ENCODE measurements at regions of chr15 and their contacts with region 1.

Region 1: GRCh38 chr15:55407949-55408791 is at the starts of genes CCPG1 and PIERCE2:
- DNase-seq: peak; percentile 76 to 95 (median 86)
- ATAC-seq: peak; percentile 92
- H3K4me3 ChIP-seq: peak within 1 kb of the TSS; percentile 80 to 84
- H3K4me3 Mint-ChIP-seq: peak within 1 kb of the TSS; percentile 89
- H3K27ac ChIP-seq: peak within 1 kb of the TSS; percentile 82
- H3K27ac Mint-ChIP-seq: peak within 1 kb of the TSS; percentile 92
- H3K4me1 ChIP-seq: peaks cover 26% of the 10 kb centered on the region
- H3K4me1 Mint-ChIP-seq: peaks cover 34% of the 10 kb centered on the region
- H3K27me3 ChIP-seq: no peaks in the 10 kb centered on the region
- H3K27me3 Mint-ChIP-seq: no peaks in the 10 kb centered on the region
- CTCF ChIP-seq: peak; percentile 93
- total RNA-seq, gene CCPG1: 35.5 to 37.6 TPM
- total RNA-seq, gene PIERCE2: not detected

Region 2: DNA sequence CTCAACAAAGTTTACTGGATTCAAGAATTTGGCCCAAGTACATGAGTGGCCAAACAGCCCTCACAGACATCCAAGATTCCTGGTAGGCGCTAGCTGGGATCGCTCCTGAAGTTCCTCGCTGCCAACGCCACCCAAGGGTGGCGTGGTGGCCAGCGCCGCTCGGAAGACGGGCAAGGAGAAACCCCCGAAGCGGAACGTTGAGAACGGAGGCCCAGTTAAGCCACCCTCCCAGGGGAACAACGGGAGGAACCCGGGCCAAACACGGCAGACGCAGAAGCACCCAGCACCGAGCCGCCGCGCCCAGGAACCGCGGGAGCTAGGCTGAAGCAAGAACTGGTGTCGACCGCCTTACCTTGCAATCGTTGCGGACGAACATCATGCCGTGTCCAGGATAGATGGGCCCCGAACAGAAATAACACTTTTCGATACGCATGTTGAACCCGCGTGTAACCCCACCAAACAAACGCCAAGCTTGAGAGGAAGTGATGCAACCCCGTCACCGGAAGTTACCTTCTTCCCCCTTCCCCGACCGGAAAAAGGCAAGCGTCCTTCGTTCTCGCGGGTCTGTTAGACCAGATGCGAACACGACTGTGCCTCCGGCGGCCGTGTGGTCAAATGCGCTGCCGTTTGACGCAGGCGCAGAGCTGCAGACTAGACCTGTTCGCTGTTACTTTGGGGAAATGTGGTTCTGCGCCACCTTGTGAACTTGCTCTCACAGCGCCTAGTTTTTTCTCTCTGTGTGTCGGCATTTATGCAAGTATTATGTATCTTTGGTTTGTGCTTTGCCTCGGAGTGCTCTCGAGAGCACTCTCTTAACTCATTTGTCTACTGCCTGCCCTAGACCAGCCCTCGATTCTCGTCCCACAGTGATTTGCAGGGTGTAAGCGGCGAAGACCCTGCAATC is 211.5 kb before region 1 on chr15 and contains the start of gene RSL24D1:
- CTCF ChIA-PET with region 1: no interaction called
- POLR2A ChIA-PET with region 1: interaction called, 16 read pairs
- intact Hi-C with region 1: loop called (anchors 1 kb)
- DNase-seq: peak; percentile 92 to 100 (median 96)
- ATAC-seq: peak; percentile 95
- H3K4me3 ChIP-seq: peak within 1 kb of the TSS; percentile 82 to 90
- H3K4me3 Mint-ChIP-seq: no peak within 1 kb of the TSS
- H3K27ac ChIP-seq: peak within 1 kb of the TSS; percentile 94
- H3K27ac Mint-ChIP-seq: no peak within 1 kb of the TSS
- H3K4me1 ChIP-seq: peaks cover 37% of the 10 kb centered on the region
- H3K4me1 Mint-ChIP-seq: peaks cover 21% of the 10 kb centered on the region
- H3K27me3 ChIP-seq: no peaks in the 10 kb centered on the region
- H3K27me3 Mint-ChIP-seq: no peaks in the 10 kb centered on the region
- CTCF ChIP-seq: no peak
- total RNA-seq, gene RSL24D1: 181 to 186 TPM

Region 3: GRCh38 chr15:55318588-55319494 is 89.3 kb before region 1 on chr15 and contains the starts of genes PIGB and PIGBOS1:
- CTCF ChIA-PET with region 1: interaction called, 5 read pairs
- POLR2A ChIA-PET with region 1: interaction called, 22 read pairs
- intact Hi-C with region 1: loop called (anchors 1 to 5 kb)
- DNase-seq: peak; percentile 59 to 90 (median 79)
- ATAC-seq: peak; percentile 88
- H3K4me3 ChIP-seq: peak within 1 kb of the TSS; percentile 80 to 98
- H3K4me3 Mint-ChIP-seq: peak within 1 kb of the TSS; percentile 98
- H3K27ac ChIP-seq: peak within 1 kb of the TSS; percentile 95 to 99
- H3K27ac Mint-ChIP-seq: peak within 1 kb of the TSS; percentile 100
- H3K4me1 ChIP-seq: peaks cover 39% of the 10 kb centered on the region
- H3K4me1 Mint-ChIP-seq: peaks cover 81% of the 10 kb centered on the region
- H3K27me3 ChIP-seq: no peaks in the 10 kb centered on the region
- H3K27me3 Mint-ChIP-seq: no peaks in the 10 kb centered on the region
- CTCF ChIP-seq: no peak
- total RNA-seq, gene PIGB: 17.8 to 19.2 TPM
- total RNA-seq, gene PIGBOS1: 6.4 to 6.8 TPM

Region 4: GRCh38 chr15:55372701-55373440 is 35.3 kb before region 1 on chr15:
- CTCF ChIA-PET with region 1: interaction called, 3 read pairs
- POLR2A ChIA-PET with region 1: no interaction called
- intact Hi-C with region 1: loop called in 1 of 2 experiments (anchors 5 kb)
- DNase-seq: no peak
- ATAC-seq: no peak
- H3K4me3 ChIP-seq: no peak overlapping the region
- H3K4me3 Mint-ChIP-seq: no peak overlapping the region
- H3K27ac ChIP-seq: no peak overlapping the region
- H3K27ac Mint-ChIP-seq: peak overlapping the region; percentile 29
- H3K4me1 ChIP-seq: no peaks in the 10 kb centered on the region
- H3K4me1 Mint-ChIP-seq: no peaks in the 10 kb centered on the region
- H3K27me3 ChIP-seq: no peaks in the 10 kb centered on the region
- H3K27me3 Mint-ChIP-seq: no peaks in the 10 kb centered on the region
- CTCF ChIP-seq: no peak

Region 5: GRCh38 chr15:55494931-55495330 is 86.8 kb after region 1 on chr15:
- CTCF ChIA-PET with region 1: no interaction called
- POLR2A ChIA-PET with region 1: no interaction called
- intact Hi-C with region 1: loop called (anchors 1 to 5 kb)
- DNase-seq: peak in 1 of 9 experiments; percentile 27
- ATAC-seq: peak; percentile 16
- H3K4me3 ChIP-seq: no peak overlapping the region
- H3K4me3 Mint-ChIP-seq: no peak overlapping the region
- H3K27ac ChIP-seq: no peak overlapping the region
- H3K27ac Mint-ChIP-seq: no peak overlapping the region
- H3K4me1 ChIP-seq: peaks cover 9% of the 10 kb centered on the region
- H3K4me1 Mint-ChIP-seq: peaks cover 9% of the 10 kb centered on the region
- H3K27me3 ChIP-seq: no peaks in the 10 kb centered on the region
- H3K27me3 Mint-ChIP-seq: no peaks in the 10 kb centered on the region
- CTCF ChIP-seq: no peak

Region 6: DNA sequence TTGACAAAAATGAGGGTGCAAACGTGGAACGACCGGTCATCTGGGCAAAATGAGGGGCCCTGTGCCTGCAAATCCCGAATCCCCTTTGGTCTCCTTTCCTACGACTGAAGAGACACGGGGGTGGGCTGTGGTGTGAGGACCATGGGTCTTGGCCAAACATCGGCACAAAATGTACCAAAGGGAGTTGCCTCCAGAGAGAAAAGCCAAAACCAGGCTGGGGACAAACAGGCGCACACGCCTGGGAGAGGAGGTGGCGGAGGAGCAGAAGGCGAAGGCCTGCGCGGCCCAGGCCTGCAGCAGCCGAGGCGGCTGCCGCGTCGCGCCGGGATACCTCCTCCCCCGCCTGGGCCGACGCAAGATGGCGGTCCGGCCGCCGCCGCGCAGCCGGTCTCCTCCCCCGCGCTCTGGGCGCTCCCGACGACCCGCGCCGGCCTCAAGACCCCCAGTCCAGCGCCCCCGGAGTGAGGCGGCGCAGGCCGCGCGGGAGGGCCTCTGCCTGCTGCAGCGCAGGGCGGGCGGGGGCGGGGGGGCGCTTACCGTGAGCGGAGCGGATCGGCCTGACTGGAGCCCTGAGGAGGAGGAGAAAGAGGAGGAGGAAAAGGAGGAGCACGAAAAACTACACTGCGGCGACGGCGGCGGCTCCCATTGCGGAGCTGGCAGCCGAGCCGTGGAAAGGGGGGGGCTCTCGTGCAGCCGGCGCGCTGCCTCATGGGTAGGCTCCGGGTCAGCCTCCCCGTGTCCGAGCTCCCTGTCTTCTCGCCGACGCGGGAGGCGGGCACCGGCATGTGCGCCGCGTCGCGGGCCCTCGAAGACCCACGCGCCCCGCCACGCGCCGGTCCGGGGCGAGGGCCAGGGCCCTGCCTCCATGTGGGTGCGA is 1325.0 kb after region 1 on chr15 and contains the start of gene ZNF280D:
- CTCF ChIA-PET with region 1: no interaction called
- POLR2A ChIA-PET with region 1: no interaction called
- intact Hi-C with region 1: loop called in 1 of 2 experiments (anchors 5 kb)
- DNase-seq: peak; percentile 56 to 88 (median 77)
- ATAC-seq: peak; percentile 84
- H3K4me3 ChIP-seq: peak within 1 kb of the TSS; percentile 73 to 76
- H3K4me3 Mint-ChIP-seq: peak within 1 kb of the TSS; percentile 89
- H3K27ac ChIP-seq: peak within 1 kb of the TSS; percentile 68 to 72
- H3K27ac Mint-ChIP-seq: peak within 1 kb of the TSS; percentile 95
- H3K4me1 ChIP-seq: peaks cover 23% of the 10 kb centered on the region
- H3K4me1 Mint-ChIP-seq: peaks cover 43% of the 10 kb centered on the region
- H3K27me3 ChIP-seq: no peaks in the 10 kb centered on the region
- H3K27me3 Mint-ChIP-seq: no peaks in the 10 kb centered on the region
- CTCF ChIP-seq: no peak
- total RNA-seq, gene ZNF280D: 19.6 to 27.4 TPM

Measured in CD8-positive, alpha-beta T cell (primary cell).